Activated naive CD4-positive, alpha-beta T cell treated with anti-CD3 and anti-CD28 coated beads, Interleukin-2, amount 10 ng/mL, durations not matched to agents 7 days and 5 days (primary cell): ENCODE measurements at regions of chr3 and their contacts with region 1.

Region 1: DNA sequence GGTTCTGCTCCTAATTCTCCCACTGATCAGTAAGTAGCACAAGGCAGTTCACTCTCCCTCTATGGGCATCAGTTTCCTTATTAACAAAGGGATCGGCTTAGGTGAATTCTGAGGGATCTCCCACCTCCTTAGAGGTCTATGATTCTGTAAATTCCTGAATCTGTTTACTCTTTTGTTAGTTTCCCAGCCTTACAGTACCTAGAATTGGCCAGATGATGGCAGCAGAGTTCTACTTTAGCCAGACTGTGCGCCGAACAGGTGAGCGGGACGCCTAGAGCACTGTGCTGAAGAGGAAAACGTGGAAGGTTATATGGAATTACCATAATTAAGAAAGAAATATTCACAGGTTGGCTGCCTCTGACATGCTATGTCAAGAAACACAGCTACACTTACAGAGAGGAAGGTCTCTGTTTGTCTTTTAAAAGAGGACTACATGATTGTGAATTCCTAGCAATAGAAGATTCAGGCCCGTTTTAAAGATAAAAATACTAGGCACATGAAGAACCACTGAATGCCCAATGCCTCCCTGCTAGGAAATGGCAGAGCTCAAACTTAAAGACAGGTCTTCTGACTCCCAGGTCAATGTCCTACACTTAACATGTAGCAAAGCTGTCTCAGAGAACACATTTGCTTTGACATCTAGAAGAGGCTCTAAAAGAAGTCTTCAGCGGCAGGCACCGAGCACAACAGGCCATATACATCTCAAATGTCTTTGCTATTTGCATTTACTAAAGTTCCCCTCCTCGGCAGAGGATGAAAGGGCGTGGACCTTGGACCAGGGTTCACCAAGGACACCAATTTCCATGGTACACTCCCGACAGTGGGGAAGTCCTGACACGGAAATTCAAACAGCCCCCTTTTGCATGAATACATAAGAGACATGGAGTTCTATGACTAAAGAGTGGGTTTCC is 259.9 kb downstream of the FGF12 start:
- DNase-seq: peak; percentile 59
- H3K4me3 Mint-ChIP-seq: no peak overlapping the region
- H3K27ac Mint-ChIP-seq: no peak overlapping the region
- H3K4me1 Mint-ChIP-seq: no peaks in the 10 kb centered on the region
- H3K27me3 Mint-ChIP-seq: peaks cover 7% of the 10 kb centered on the region

Region 2: GRCh38 chr3:192802957-192803899 is 335.7 kb after region 1 on chr3:
- CTCF ChIA-PET with region 1: interaction called, 10 read pairs
- DNase-seq: no peak
- H3K4me3 Mint-ChIP-seq: no peak overlapping the region
- H3K27ac Mint-ChIP-seq: no peak overlapping the region
- H3K4me1 Mint-ChIP-seq: no peaks in the 10 kb centered on the region
- H3K27me3 Mint-ChIP-seq: no peaks in the 10 kb centered on the region